ENCODE measurements at regions of chr7 and their contacts with region 1.

Region 1: DNA sequence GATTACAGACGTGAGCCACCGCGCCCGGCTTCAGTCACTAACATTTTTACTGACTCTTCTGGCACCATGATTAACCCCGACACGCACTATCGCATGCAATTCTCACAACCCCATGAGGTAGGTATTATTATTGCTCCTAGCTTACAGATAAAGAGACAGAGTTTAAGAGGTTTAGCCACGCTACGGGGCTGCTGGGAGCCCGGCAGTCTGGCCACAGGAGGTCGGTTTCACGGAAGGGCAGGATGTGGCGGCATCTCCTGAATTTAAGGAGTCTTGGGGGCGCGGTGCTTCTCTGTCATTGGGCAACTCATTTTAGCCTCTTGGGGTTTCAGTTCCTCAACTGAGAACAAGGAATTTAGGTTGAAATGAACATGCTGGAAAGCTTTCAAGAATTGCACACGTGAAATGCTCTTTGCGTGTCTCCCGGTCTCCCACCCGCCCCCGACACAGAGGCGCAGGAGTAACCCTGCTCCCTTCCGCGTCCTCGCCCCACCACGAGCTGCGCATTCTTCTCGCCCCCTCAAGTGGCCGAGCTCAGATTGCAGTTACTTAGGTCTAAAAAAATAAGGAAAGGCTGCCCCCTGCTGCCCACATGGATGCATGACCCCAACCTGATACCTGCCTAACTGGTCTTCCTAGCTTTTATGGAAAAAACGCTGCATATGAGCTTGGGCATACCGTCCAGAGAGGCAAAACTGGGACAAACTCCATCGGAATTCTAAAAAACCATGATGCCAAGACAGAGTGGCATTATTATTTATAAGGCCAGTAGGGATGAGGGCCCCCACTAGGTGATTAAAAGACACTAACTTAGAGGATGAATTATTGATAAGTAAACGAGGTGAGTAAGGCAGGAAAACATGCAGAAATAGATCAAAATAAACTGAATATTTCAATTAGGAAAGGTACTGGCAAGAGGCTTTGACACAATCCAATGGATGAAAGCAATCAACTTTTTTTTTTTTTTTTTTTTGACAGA is 12.4 kb downstream of the PRSS2 start:
- DNase-seq: peak; percentile 93
- ATAC-seq: peak; percentile 90
- H3K4me3 ChIP-seq: peak overlapping the region; percentile 28 to 76 (median 56)
- H3K4me3 Mint-ChIP-seq: peak overlapping the region; percentile 81
- H3K27ac ChIP-seq: peak overlapping the region; percentile 27 to 56
- H3K27ac Mint-ChIP-seq: peak overlapping the region; percentile 92
- H3K4me1 ChIP-seq: peaks cover 14 to 25% of the 10 kb centered on the region in 2 donors
- H3K4me1 Mint-ChIP-seq: peaks cover 37% of the 10 kb centered on the region
- H3K27me3 ChIP-seq: no peaks in the 10 kb centered on the region
- H3K27me3 Mint-ChIP-seq: no peaks in the 10 kb centered on the region
- CTCF ChIP-seq: peak; percentile 91

Region 2: GRCh38 chr7:142478479-142479072 is 304.6 kb before region 1 on chr7:
- CTCF ChIA-PET with region 1: no interaction called
- POLR2A ChIA-PET with region 1: no interaction called
- intact Hi-C with region 1: no loop called
- DNase-seq: peak; percentile 47
- ATAC-seq: peak; percentile 43
- H3K4me3 ChIP-seq: no peak overlapping the region
- H3K4me3 Mint-ChIP-seq: no peak overlapping the region
- H3K27ac ChIP-seq: no peak overlapping the region
- H3K27ac Mint-ChIP-seq: no peak overlapping the region
- H3K4me1 ChIP-seq: peaks cover 5 to 14% of the 10 kb centered on the region in 2 donors
- H3K4me1 Mint-ChIP-seq: peaks cover 14% of the 10 kb centered on the region
- H3K27me3 ChIP-seq: peaks cover 0 to 2% (median 0%) of the 10 kb centered on the region in 4 experiments
- H3K27me3 Mint-ChIP-seq: peaks cover 6% of the 10 kb centered on the region
- CTCF ChIP-seq: peak; percentile 67

Region 3: GRCh38 chr7:142632291-142633134 is 150.7 kb before region 1 on chr7:
- CTCF ChIA-PET with region 1: interaction called, 119 read pairs
- POLR2A ChIA-PET with region 1: interaction called, 17 read pairs
- intact Hi-C with region 1: loop called (anchors 1 kb)
- DNase-seq: peak; percentile 85
- ATAC-seq: peak; percentile 97
- H3K4me3 ChIP-seq: no peak overlapping the region
- H3K4me3 Mint-ChIP-seq: no peak overlapping the region
- H3K27ac ChIP-seq: no peak overlapping the region
- H3K27ac Mint-ChIP-seq: no peak overlapping the region
- H3K4me1 ChIP-seq: no peaks in the 10 kb centered on the region
- H3K4me1 Mint-ChIP-seq: peaks cover 3% of the 10 kb centered on the region
- H3K27me3 ChIP-seq: peaks cover 0 to 5% (median 2%) of the 10 kb centered on the region in 4 experiments
- H3K27me3 Mint-ChIP-seq: peaks cover 30% of the 10 kb centered on the region
- CTCF ChIP-seq: peak; percentile 85

Region 4: GRCh38 chr7:142689439-142690120 is 93.6 kb before region 1 on chr7:
- CTCF ChIA-PET with region 1: interaction called, 23 read pairs
- POLR2A ChIA-PET with region 1: no interaction called
- intact Hi-C with region 1: no loop called
- DNase-seq: no peak
- ATAC-seq: no peak
- H3K4me3 ChIP-seq: no peak overlapping the region
- H3K4me3 Mint-ChIP-seq: no peak overlapping the region
- H3K27ac ChIP-seq: no peak overlapping the region
- H3K27ac Mint-ChIP-seq: no peak overlapping the region
- H3K4me1 ChIP-seq: peaks cover 5% of the 10 kb centered on the region in 2 donors
- H3K4me1 Mint-ChIP-seq: peaks cover 9% of the 10 kb centered on the region
- H3K27me3 ChIP-seq: peaks cover 0 to 3% (median 0%) of the 10 kb centered on the region in 4 experiments
- H3K27me3 Mint-ChIP-seq: no peaks in the 10 kb centered on the region
- CTCF ChIP-seq: no peak

Region 5: GRCh38 chr7:142739923-142740492 is 43.2 kb before region 1 on chr7:
- CTCF ChIA-PET with region 1: interaction called, 42 read pairs
- POLR2A ChIA-PET with region 1: no interaction called
- intact Hi-C with region 1: loop called (anchors 1 kb)
- DNase-seq: peak; percentile 82
- ATAC-seq: peak; percentile 98
- H3K4me3 ChIP-seq: peak overlapping the region in 1 of 5 experiments; percentile 16
- H3K4me3 Mint-ChIP-seq: peak overlapping the region; percentile 4
- H3K27ac ChIP-seq: no peak overlapping the region
- H3K27ac Mint-ChIP-seq: peak overlapping the region; percentile 75
- H3K4me1 ChIP-seq: peaks cover 22 to 26% of the 10 kb centered on the region in 2 donors
- H3K4me1 Mint-ChIP-seq: peaks cover 41% of the 10 kb centered on the region
- H3K27me3 ChIP-seq: no peaks in the 10 kb centered on the region
- H3K27me3 Mint-ChIP-seq: no peaks in the 10 kb centered on the region
- CTCF ChIP-seq: peak; percentile 64

Region 6: DNA sequence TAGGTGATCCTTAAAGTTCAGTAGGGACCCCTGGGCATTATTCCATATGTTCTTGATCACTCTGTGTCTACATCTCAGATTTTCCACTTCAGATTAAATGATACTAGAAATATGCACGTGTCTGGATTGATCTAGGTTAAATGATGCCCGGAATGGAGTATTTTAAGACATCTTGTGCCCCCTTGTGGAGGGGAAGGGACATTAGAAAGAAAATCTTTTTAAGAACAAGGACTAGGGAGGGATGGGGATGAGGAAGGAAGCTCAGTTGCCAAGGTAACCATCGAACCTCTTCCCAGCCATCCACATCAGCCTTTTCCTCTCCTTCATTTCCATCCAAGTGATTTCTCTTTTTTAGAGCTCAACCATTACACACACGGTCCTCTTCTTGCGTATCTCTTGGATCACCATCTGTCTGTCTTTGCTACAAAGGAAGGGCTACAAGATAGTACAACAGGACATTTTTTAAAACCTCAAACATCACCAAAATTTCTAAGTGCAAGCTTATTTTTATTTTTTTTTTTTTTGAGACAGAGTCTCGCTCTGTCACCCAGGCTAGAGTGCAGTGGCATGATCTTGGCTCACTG is 28.0 kb after region 1 on chr7:
- CTCF ChIA-PET with region 1: interaction called, 1,138 read pairs
- POLR2A ChIA-PET with region 1: interaction called, 961 read pairs
- intact Hi-C with region 1: loop called (anchors 1 kb)
- DNase-seq: peak; percentile 84
- ATAC-seq: no peak
- H3K4me3 ChIP-seq: peak overlapping the region in 1 of 5 experiments; percentile 8
- H3K4me3 Mint-ChIP-seq: peak overlapping the region; percentile 60
- H3K27ac ChIP-seq: peak overlapping the region; percentile 1 to 99
- H3K27ac Mint-ChIP-seq: peak overlapping the region; percentile 94
- H3K4me1 ChIP-seq: peaks cover 82 to 83% of the 10 kb centered on the region in 2 donors
- H3K4me1 Mint-ChIP-seq: peaks cover 82% of the 10 kb centered on the region
- H3K27me3 ChIP-seq: no peaks in the 10 kb centered on the region
- H3K27me3 Mint-ChIP-seq: no peaks in the 10 kb centered on the region
- CTCF ChIP-seq: peak; percentile 81

Region 7: DNA sequence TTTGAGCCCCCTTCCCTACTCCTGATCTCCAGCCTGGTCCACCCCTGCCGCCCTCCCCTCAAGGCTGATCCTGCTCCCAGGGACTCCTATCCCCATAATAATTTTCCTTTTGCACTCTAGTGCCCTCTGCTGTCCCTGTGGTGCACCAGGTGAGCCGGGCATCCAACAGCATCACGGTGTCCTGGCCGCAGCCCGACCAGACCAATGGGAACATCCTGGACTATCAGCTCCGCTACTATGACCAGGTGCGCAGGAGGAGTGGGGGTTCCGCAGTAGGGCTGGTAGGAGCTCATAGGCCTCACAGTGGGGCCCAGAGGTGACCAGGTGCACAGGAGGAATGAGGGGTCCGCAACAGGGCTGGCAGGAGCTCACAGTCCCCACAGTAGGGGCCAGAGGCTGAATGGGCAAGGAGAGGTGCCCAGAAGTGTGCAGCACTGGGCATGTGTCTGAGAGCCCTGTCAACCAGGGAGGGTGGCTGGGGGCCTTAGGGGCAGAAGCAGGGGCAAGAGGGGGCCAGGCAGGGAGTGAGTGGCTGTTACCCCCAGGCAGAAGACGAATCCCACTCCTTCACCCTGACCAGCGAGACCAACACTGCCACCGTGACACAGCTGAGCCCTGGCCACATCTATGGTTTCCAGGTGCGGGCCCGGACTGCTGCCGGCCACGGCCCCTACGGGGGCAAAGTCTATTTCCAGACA is 83.3 kb after region 1 on chr7:
- CTCF ChIA-PET with region 1: interaction called, 14 read pairs
- POLR2A ChIA-PET with region 1: interaction called, 8 read pairs
- intact Hi-C with region 1: no loop called
- DNase-seq: peak; percentile 29
- ATAC-seq: no peak
- H3K4me3 ChIP-seq: no peak overlapping the region
- H3K4me3 Mint-ChIP-seq: no peak overlapping the region
- H3K27ac ChIP-seq: no peak overlapping the region
- H3K27ac Mint-ChIP-seq: no peak overlapping the region
- H3K4me1 ChIP-seq: no peaks in the 10 kb centered on the region
- H3K4me1 Mint-ChIP-seq: peaks cover 3% of the 10 kb centered on the region
- H3K27me3 ChIP-seq: no peaks in the 10 kb centered on the region
- H3K27me3 Mint-ChIP-seq: no peaks in the 10 kb centered on the region
- CTCF ChIP-seq: peak; percentile 24

Measured in B cell (primary cell).